ENCODE measurements at regions of chr7 and their contacts with region 1.

Region 1: GRCh38 chr7:151936207-151936606 is 20.0 kb upstream of the GALNTL5 start:
- DNase-seq: peak in 7 of 9 donors; percentile 43 to 78 (median 67)
- ATAC-seq: peak; percentile 83
- H3K4me3 ChIP-seq: peak overlapping the region; percentile 39
- H3K4me3 Mint-ChIP-seq: peak overlapping the region; percentile 67 to 91 (median 80)
- H3K27ac ChIP-seq: peak overlapping the region; percentile 68
- H3K27ac Mint-ChIP-seq: peak overlapping the region; percentile 91 to 99 (median 97)
- H3K4me1 ChIP-seq: peaks cover 8% of the 10 kb centered on the region in 2 donors
- H3K4me1 Mint-ChIP-seq: peaks cover 17 to 40% (median 26%) of the 10 kb centered on the region in 7 donors
- H3K27me3 ChIP-seq: no peaks in the 10 kb centered on the region
- H3K27me3 Mint-ChIP-seq: peaks cover 0 to 27% (median 0%) of the 10 kb centered on the region in 5 donors

Region 2: DNA sequence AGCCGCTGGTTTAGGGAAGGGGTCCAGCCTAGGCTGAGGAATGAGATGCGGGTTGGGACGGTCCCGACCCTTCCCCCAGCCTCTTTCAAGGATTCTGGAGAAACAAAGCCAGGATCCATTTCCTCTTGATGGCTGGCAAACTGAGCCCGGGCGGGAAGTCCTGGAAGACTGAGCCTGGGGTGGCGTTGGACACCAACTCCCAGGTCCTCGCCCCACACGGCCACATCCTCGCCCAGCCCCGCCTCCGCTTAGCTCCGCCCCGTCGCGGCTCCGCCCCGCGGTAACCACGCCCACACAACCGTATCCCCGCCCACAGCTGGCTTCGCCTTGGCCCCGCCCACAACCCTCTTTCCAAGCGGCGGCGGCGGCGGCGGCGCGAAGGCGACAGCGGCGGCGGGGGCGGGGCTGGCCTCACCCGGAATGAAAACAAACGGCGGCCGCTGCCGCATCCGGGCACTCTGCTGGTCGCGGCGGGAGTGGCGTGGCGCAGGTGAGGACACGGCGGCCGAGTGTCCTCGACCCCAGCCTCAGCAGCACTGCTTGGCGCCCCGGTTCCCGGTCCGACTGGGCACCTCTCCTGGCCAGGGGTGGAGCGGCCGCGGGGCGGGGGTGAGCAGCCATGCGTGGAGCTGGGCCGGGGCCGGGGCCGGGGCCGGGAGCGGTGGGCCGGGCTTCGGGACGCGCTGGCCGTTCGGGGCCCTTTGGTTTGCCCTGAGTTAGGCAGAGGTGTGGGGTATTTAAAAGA is 594.7 kb before region 1 on chr7 and contains the start of gene NUB1:
- CTCF ChIA-PET with region 1: no interaction called
- POLR2A ChIA-PET with region 1: no interaction called
- intact Hi-C with region 1: loop called in 1 of 2 experiments (anchors 10 kb)
- DNase-seq: peak; percentile 79 to 99 (median 90)
- ATAC-seq: peak; percentile 98
- H3K4me3 ChIP-seq: peak within 1 kb of the TSS; percentile 84
- H3K4me3 Mint-ChIP-seq: peak within 1 kb of the TSS; percentile 84 to 91 (median 87)
- H3K27ac ChIP-seq: peak within 1 kb of the TSS; percentile 88
- H3K27ac Mint-ChIP-seq: peak within 1 kb of the TSS; percentile 83 to 96 (median 90)
- H3K4me1 ChIP-seq: peaks cover 19 to 21% of the 10 kb centered on the region in 2 donors
- H3K4me1 Mint-ChIP-seq: peaks cover 10 to 44% (median 33%) of the 10 kb centered on the region in 7 donors
- H3K27me3 ChIP-seq: no peaks in the 10 kb centered on the region
- H3K27me3 Mint-ChIP-seq: no peaks in the 10 kb centered on the region
- total RNA-seq, gene NUB1: 75.1 to 116 (median 82.0) TPM

Region 3: DNA sequence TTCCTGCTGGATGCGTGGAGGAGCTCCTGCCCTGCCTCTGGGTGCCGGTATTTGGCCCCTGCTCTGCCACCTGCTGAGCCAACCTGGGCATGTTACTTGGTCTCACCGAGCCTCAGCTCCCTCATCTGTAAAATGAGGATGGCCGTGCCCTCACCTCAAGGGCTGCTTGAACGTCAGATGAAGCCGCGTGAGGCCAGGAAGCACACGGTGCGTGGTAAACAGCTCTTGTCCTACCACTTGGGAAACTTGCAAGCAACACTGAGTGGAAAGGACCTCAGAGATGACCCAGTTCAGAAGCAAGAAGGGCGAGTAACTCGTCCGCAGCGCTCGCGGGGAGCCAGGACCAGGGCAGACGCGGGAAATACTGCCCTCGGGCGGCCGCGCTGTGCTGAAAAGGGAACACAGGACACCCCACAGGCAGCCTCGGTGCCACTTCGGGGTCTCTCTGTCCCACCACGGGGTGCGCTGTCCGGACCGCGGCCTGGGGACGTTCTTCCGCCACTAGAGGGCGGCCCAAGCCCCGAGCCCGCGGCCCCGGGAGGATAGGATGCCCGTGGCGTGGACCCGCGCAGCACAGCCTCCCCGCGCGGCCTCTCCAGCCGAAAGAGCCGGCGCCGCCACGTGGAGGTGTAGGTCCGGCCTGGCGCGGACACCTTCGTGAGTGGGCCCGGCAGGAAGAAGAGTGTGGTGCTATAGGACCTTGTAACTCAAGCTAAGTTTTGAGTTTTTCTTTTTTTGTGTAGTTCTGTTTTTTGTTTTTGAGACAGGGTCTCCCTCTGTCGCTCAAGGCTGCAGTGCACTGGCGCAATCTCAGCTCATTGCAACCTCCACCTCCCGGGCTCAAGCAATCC is 153.4 kb before region 1 on chr7:
- CTCF ChIA-PET with region 1: interaction called, 3 read pairs
- POLR2A ChIA-PET with region 1: no interaction called
- intact Hi-C with region 1: loop called (anchors 1 to 2 kb)
- DNase-seq: peak; percentile 33 to 73 (median 56)
- ATAC-seq: peak; percentile 91
- H3K4me3 ChIP-seq: peak overlapping the region; percentile 57
- H3K4me3 Mint-ChIP-seq: peak overlapping the region; percentile 77 to 95 (median 88)
- H3K27ac ChIP-seq: peak overlapping the region; percentile 53
- H3K27ac Mint-ChIP-seq: peak overlapping the region in 8 of 9 donors; percentile 46 to 93 (median 82)
- H3K4me1 ChIP-seq: peaks cover 0 to 5% of the 10 kb centered on the region in 2 donors
- H3K4me1 Mint-ChIP-seq: peaks cover 10 to 25% (median 16%) of the 10 kb centered on the region in 7 donors
- H3K27me3 ChIP-seq: no peaks in the 10 kb centered on the region
- H3K27me3 Mint-ChIP-seq: peaks cover 0 to 2% (median 0%) of the 10 kb centered on the region in 5 donors

Region 4: DNA sequence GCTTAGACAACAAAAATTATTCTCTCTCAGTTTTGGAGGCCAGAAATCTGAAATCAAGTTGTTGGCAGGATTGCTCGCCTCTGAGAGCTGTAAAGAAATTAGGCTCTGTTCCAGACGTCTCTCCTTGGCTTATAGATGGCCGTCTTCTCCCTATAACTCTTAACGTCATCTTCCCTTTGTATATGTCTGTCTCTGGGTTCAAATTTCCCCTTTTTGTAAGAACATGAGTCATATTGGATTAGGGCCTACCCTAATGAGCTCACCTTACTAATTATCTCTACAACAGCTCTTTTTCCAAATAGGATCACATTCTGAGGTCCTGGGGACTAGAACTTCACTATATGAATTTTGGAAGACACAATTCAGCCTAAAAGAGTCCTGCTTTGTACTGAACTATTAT is 42.4 kb after region 1 on chr7:
- CTCF ChIA-PET with region 1: no interaction called
- POLR2A ChIA-PET with region 1: no interaction called
- intact Hi-C with region 1: no loop called
- DNase-seq: no peak
- ATAC-seq: no peak
- H3K4me3 ChIP-seq: no peak overlapping the region
- H3K4me3 Mint-ChIP-seq: no peak overlapping the region
- H3K27ac ChIP-seq: no peak overlapping the region
- H3K27ac Mint-ChIP-seq: no peak overlapping the region
- H3K4me1 ChIP-seq: no peaks in the 10 kb centered on the region
- H3K4me1 Mint-ChIP-seq: no peaks in the 10 kb centered on the region
- H3K27me3 ChIP-seq: no peaks in the 10 kb centered on the region
- H3K27me3 Mint-ChIP-seq: peaks cover 0 to 20% (median 6%) of the 10 kb centered on the region in 5 donors

Region 5: GRCh38 chr7:151992375-151992774 is 56.2 kb after region 1 on chr7:
- CTCF ChIA-PET with region 1: no interaction called
- POLR2A ChIA-PET with region 1: no interaction called
- intact Hi-C with region 1: loop called in 1 of 2 experiments (anchors 2 kb)
- DNase-seq: peak in 8 of 9 donors; percentile 14 to 54 (median 44)
- ATAC-seq: peak; percentile 96
- H3K4me3 ChIP-seq: no peak overlapping the region
- H3K4me3 Mint-ChIP-seq: peak overlapping the region in 3 of 10 donors; percentile 3 to 25 (median 18)
- H3K27ac ChIP-seq: no peak overlapping the region
- H3K27ac Mint-ChIP-seq: peak overlapping the region in 2 of 9 donors; percentile 27 to 55
- H3K4me1 ChIP-seq: no peaks in the 10 kb centered on the region
- H3K4me1 Mint-ChIP-seq: peaks cover 0 to 10% (median 7%) of the 10 kb centered on the region in 7 donors
- H3K27me3 ChIP-seq: no peaks in the 10 kb centered on the region
- H3K27me3 Mint-ChIP-seq: peaks cover 14 to 41% (median 30%) of the 10 kb centered on the region in 5 donors

Region 6: GRCh38 chr7:152145853-152146466 is 209.8 kb after region 1 on chr7:
- CTCF ChIA-PET with region 1: no interaction called
- POLR2A ChIA-PET with region 1: interaction called, 4 read pairs
- intact Hi-C with region 1: loop called (anchors 1 to 10 kb)
- DNase-seq: peak in 7 of 9 donors; percentile 30 to 60 (median 54)
- ATAC-seq: peak; percentile 63
- H3K4me3 ChIP-seq: no peak overlapping the region
- H3K4me3 Mint-ChIP-seq: peak overlapping the region; percentile 17 to 77 (median 68)
- H3K27ac ChIP-seq: peak overlapping the region; percentile 69
- H3K27ac Mint-ChIP-seq: peak overlapping the region; percentile 88 to 97 (median 93)
- H3K4me1 ChIP-seq: peaks cover 25 to 43% of the 10 kb centered on the region in 2 donors
- H3K4me1 Mint-ChIP-seq: peaks cover 36 to 51% (median 49%) of the 10 kb centered on the region in 7 donors
- H3K27me3 ChIP-seq: no peaks in the 10 kb centered on the region
- H3K27me3 Mint-ChIP-seq: no peaks in the 10 kb centered on the region